Panc1 (cell line): ENCODE measurements at regions of chr19 and their contacts with region 1.

Region 1: GRCh38 chr19:53642381-53643081 is 10.7 kb downstream of the DPRX start:
- DNase-seq: no peak
- ATAC-seq: no peak
- H3K4me3 ChIP-seq: no peak overlapping the region
- H3K27ac ChIP-seq: no peak overlapping the region
- H3K4me1 ChIP-seq: no peaks in the 10 kb centered on the region
- H3K27me3 ChIP-seq: no peaks in the 10 kb centered on the region
- CTCF ChIP-seq: no peak

Region 2: GRCh38 chr19:53532362-53532761 is 110.2 kb before region 1 on chr19:
- CTCF ChIA-PET with region 1: no interaction called
- POLR2A ChIA-PET with region 1: no interaction called
- in situ Hi-C with region 1: no loop called
- intact Hi-C with region 1: no loop called
- DNase-seq: no peak
- ATAC-seq: no peak
- H3K4me3 ChIP-seq: no peak overlapping the region
- H3K27ac ChIP-seq: no peak overlapping the region
- H3K4me1 ChIP-seq: 0 out of 2 replicates have a peak, but pooled peaks cover 3% of the 10 kb centered on the region
- H3K27me3 ChIP-seq: no peaks in the 10 kb centered on the region
- CTCF ChIP-seq: no peak

Region 3: GRCh38 chr19:53659292-53659691 is 16.8 kb after region 1 on chr19:
- CTCF ChIA-PET with region 1: interaction called, 10 read pairs
- POLR2A ChIA-PET with region 1: no interaction called
- in situ Hi-C with region 1: no loop called
- intact Hi-C with region 1: no loop called
- DNase-seq: peak; percentile 10
- ATAC-seq: peak; percentile 94
- H3K4me3 ChIP-seq: no peak overlapping the region
- H3K27ac ChIP-seq: peak overlapping the region; percentile 49; the same call in 1 of the 2 replicates
- H3K4me1 ChIP-seq: peaks cover 4% of the 10 kb centered on the region; the same call in 1 of the 2 replicates
- H3K27me3 ChIP-seq: no peaks in the 10 kb centered on the region
- CTCF ChIP-seq: peak; percentile 83; the same call in 1 of the 2 replicates

Region 4: DNA sequence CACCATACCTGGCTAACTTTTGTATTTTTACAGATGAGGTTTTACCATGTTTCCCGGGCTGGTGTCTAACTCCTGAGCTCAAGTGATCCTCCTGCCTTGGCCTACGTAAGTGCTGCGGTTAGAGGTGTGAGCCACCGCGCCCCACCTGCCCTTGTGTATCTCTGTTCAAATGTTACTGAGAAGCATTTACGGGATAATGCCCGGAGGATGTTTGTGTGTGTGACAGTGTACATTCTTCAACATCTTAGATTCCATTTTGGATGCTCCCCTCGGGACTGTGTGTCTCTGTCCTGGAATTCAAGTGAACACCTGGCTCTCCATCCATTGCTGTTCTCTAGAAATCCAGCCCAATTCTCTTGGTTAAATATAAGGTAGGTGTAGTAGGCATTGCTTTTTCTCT is 87.9 kb after region 1 on chr19:
- CTCF ChIA-PET with region 1: no interaction called
- POLR2A ChIA-PET with region 1: no interaction called
- in situ Hi-C with region 1: no loop called
- intact Hi-C with region 1: no loop called
- DNase-seq: no peak
- ATAC-seq: no peak
- H3K4me3 ChIP-seq: no peak overlapping the region
- H3K27ac ChIP-seq: no peak overlapping the region
- H3K4me1 ChIP-seq: no peaks in the 10 kb centered on the region
- H3K27me3 ChIP-seq: peaks cover 7% of the 10 kb centered on the region; the same call in 1 of the 2 replicates
- CTCF ChIP-seq: no peak